Cardiac septum (tissue), 1 donor: ENCODE measurements at regions of chr1 and their contacts with region 1.

Region 1: GRCh38 chr1:2044510-2045319 is 5.5 kb upstream of the PRKCZ start:
- DNase-seq: peak; percentile 87

Region 2: GRCh38 chr1:1943834-1944570 is 100.7 kb before region 1 on chr1:
- intact Hi-C with region 1: loop called (anchors 1 kb)
- DNase-seq: no peak

Region 3: GRCh38 chr1:2014741-2015735 is 29.7 kb before region 1 on chr1:
- intact Hi-C with region 1: no loop called
- DNase-seq: no peak